ENCODE measurements at regions of chr3 and their contacts with region 1.

Region 1: DNA sequence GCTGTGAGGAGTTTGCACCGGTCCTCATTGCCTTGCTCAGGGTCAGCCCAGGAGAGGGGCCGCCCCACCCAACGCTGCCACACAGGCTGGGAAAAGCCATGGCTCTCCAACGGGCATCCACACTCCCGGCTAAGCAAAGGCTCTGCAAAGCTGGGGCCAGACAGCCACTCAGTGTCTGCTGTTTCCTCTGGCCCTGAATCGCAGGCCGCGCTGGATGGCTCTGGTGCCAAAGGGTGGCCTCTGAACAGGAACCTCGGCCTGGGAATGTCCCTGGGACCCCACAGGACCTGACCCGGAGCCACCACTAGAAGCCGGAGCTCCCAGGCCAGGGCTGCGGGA is 42.9 kb downstream of the RPN1 start:
- DNase-seq: no peak
- H3K4me3 ChIP-seq: peak overlapping the region; percentile 38 to 58 (median 49)
- H3K27ac ChIP-seq: peak overlapping the region; percentile 57 to 81 (median 69)
- H3K4me1 ChIP-seq: peaks cover 0 to 12% (median 8%) of the 10 kb centered on the region in 4 donors
- H3K27me3 ChIP-seq: no peaks in the 10 kb centered on the region
- CTCF ChIP-seq: no peak
- EP300 ChIP-seq: no peak
- POLR2A ChIP-seq: no peak

Region 2: GRCh38 chr3:127884041-127884440 is 723.6 kb before region 1 on chr3:
- intact Hi-C with region 1: no loop called
- DNase-seq: no peak
- H3K4me3 ChIP-seq: no peak overlapping the region
- H3K27ac ChIP-seq: no peak overlapping the region
- H3K4me1 ChIP-seq: no peaks in the 10 kb centered on the region
- H3K27me3 ChIP-seq: no peaks in the 10 kb centered on the region
- CTCF ChIP-seq: no peak
- EP300 ChIP-seq: no peak
- POLR2A ChIP-seq: no peak

Region 3: GRCh38 chr3:128075516-128076482 is 531.9 kb before region 1 on chr3:
- intact Hi-C with region 1: loop called (anchors 5 kb)
- DNase-seq: peak; percentile 90
- H3K4me3 ChIP-seq: peak overlapping the region; percentile 22 to 56 (median 53)
- H3K27ac ChIP-seq: peak overlapping the region; percentile 7 to 62 (median 36)
- H3K4me1 ChIP-seq: peaks cover 0 to 28% (median 23%) of the 10 kb centered on the region in 4 donors
- H3K27me3 ChIP-seq: peaks cover 0 to 4% (median 0%) of the 10 kb centered on the region in 3 donors
- CTCF ChIP-seq: peak; percentile 54 to 98 (median 82)
- EP300 ChIP-seq: no peak
- POLR2A ChIP-seq: no peak

Region 4: GRCh38 chr3:128095222-128095703 is 512.4 kb before region 1 on chr3:
- intact Hi-C with region 1: loop called (anchors 5 kb)
- DNase-seq: peak; percentile 86
- H3K4me3 ChIP-seq: no peak overlapping the region
- H3K27ac ChIP-seq: peak overlapping the region in 1 of 4 donors; percentile 38
- H3K4me1 ChIP-seq: peaks cover 0 to 8% (median 4%) of the 10 kb centered on the region in 4 donors
- H3K27me3 ChIP-seq: no peaks in the 10 kb centered on the region
- CTCF ChIP-seq: peak; percentile 60 to 80 (median 72)
- EP300 ChIP-seq: no peak
- POLR2A ChIP-seq: no peak

Region 5: GRCh38 chr3:128170805-128171516 is 436.7 kb before region 1 on chr3:
- intact Hi-C with region 1: loop called (anchors 5 kb)
- DNase-seq: peak; percentile 85
- H3K4me3 ChIP-seq: no peak overlapping the region
- H3K27ac ChIP-seq: no peak overlapping the region
- H3K4me1 ChIP-seq: peaks cover 0 to 18% (median 0%) of the 10 kb centered on the region in 4 donors
- H3K27me3 ChIP-seq: no peaks in the 10 kb centered on the region
- CTCF ChIP-seq: peak; percentile 57 to 83 (median 68)
- EP300 ChIP-seq: no peak
- POLR2A ChIP-seq: no peak

Region 6: DNA sequence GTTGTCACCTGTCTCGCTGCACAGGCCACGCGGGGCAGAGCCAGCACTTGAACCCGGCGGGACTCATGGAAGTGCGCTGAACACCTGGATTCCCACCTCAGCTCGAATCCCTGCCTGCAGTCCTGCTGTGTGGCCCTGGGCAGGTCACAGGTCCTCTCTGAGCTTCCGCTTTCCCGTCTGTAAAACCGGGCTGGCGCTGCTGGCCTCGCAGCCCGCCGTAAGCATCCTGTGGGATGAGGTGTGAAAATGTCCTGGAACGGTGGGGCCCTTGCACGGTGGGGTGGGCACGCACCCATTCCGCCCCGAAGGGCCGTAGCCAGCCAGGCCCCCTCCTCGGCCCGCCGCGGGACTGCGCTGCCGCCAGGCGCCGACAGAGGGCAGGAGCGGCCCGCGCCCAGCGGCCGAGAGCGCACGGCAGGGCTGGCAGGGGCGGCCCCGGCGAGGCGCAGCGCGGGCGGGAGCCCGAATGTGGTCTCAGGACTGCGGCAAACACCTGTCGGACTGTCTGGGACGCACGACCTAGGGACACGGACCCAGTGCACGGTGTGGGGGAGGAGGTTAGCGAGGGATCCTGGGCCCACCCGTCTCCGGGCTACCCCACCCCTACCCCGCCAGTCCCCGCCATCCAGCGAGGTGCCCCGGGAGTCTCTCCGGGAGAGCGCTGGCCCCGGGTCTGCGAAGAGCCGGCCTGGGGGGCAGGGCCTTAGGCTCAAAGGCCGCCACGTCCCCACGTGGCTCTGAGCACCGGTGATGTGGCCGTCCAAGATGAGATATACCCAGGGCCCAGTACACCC is 181.4 kb before region 1 on chr3:
- intact Hi-C with region 1: loop called (anchors 1 kb)
- DNase-seq: no peak
- H3K4me3 ChIP-seq: peak overlapping the region in 2 of 4 donors; percentile 28 to 32
- H3K27ac ChIP-seq: no peak overlapping the region
- H3K4me1 ChIP-seq: peaks cover 0 to 9% (median 7%) of the 10 kb centered on the region in 4 donors
- H3K27me3 ChIP-seq: peaks cover 0 to 53% (median 34%) of the 10 kb centered on the region in 3 donors
- CTCF ChIP-seq: peak; percentile 36 to 94 (median 54)
- EP300 ChIP-seq: no peak
- POLR2A ChIP-seq: no peak

Region 7: GRCh38 chr3:128680602-128681368 is 73.1 kb after region 1 on chr3:
- intact Hi-C with region 1: no loop called
- DNase-seq: peak; percentile 99
- H3K4me3 ChIP-seq: peak overlapping the region; percentile 54 to 78 (median 62)
- H3K27ac ChIP-seq: peak overlapping the region; percentile 86 to 95 (median 92)
- H3K4me1 ChIP-seq: peaks cover 0 to 6% (median 3%) of the 10 kb centered on the region in 4 donors
- H3K27me3 ChIP-seq: no peaks in the 10 kb centered on the region
- CTCF ChIP-seq: peak; percentile 95 to 100 (median 99)
- EP300 ChIP-seq: peak in 1 of 4 donors; percentile 15
- POLR2A ChIP-seq: peak; percentile 79 to 89